Activated CD8-positive, alpha-beta memory T cell treated with anti-CD3 and anti-CD28 coated beads, Interleukin-2, amount 10 ng/mL, durations not matched to agents 7 days and 5 days (primary cell): ENCODE measurements at regions of chrX and their contacts with region 1.

Region 1: DNA sequence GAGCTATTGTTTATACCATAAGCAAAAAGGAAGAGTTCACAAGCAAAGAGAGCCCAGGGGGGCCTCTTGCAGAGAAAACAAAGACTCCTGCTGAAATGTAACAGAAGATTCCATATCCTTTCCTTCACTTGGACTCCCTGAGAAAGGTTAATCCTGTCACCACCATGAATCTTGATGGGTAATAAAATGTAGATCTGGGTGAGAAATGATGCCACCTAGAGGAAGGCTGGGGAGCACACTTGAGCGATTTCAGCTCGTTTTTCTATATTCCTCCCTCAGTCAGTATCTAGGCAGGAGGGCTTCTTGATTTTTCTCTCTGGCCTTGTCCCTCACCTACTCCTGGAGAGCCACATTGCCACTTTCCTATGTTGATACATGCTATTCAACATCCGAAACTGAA is 10.2 kb upstream of the KCNE5 start:
- DNase-seq: no peak
- ATAC-seq: no peak
- H3K4me3 Mint-ChIP-seq: no peak overlapping the region
- H3K27ac Mint-ChIP-seq: no peak overlapping the region
- H3K4me1 Mint-ChIP-seq: peaks cover 20% of the 10 kb centered on the region
- H3K27me3 Mint-ChIP-seq: no peaks in the 10 kb centered on the region

Region 2: DNA sequence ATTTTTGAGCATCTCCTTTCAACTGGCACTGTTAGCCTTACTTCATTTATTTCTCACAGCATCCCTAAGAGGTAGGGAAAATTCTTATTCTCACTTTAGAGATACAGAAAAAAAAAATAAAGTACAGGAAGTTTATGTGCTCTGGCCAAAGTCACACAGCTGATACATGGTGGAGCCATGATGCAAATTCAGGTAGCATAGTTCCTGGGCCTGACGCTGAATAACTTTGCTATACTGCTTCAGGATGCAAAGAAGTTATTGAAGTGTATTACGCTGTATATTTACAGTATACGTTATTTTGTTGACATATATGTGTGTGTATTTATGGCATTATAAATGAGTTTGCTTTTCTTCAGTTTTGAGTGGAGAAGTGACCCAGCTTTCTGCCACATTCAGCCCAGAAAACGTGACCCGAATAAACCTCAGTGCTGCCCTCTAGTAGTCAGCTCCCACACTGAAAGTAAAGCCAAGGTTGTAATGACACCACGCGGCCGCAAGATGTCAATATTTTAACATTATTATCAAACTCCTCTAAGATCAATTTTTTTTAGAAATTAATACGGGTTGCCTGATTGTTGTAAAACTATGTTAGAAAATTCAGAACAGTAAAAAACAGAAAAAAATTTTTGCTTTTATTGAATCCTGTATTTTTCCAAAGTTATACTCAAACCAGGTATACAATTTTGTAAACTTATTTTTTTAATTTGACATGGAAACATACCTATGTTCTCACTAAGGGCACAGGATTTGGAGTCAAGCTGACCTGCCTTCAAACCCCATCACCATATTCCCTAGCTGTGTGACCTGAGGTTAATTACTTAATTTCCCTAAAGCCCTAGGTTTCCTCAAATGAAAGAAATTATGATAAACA is 149.5 kb before region 1 on chrX:
- CTCF ChIA-PET with region 1: interaction called, 19 read pairs
- DNase-seq: peak; percentile 65
- ATAC-seq: peak; percentile 49
- H3K4me3 Mint-ChIP-seq: no peak overlapping the region
- H3K27ac Mint-ChIP-seq: no peak overlapping the region
- H3K4me1 Mint-ChIP-seq: peaks cover 2% of the 10 kb centered on the region
- H3K27me3 Mint-ChIP-seq: no peaks in the 10 kb centered on the region

Region 3: DNA sequence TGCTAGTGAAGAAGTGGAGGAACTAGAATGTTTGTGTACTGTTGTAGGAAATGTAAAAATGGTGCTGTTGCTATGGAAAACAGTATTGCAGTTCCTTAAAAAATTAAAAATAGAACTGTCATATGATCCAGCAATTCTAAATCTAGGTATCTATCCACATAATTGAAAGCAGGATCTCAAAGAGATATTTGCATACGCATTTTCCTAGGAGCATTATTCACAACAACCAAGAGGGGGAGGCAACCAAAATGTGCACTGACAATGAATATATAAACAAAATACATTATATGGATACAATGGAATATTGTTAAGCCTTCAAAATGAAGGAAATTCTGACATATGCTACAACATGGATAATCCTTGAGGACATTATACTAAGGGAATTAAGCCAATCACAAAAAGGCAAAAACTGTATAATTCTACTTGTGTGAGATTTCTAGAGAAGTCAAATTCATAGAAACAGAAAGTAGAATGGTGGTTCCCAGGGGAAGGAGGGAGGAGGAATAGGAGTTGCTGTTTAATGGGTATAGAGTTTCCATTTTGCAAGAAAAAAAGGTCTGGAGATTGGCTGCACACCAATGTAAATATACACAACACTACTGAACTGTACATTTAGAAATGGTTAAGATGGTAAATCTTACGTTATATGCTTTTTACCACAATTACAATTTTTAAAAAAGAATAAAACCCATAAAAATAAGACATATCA is 25.4 kb after region 1 on chrX:
- CTCF ChIA-PET with region 1: no interaction called
- DNase-seq: no peak
- ATAC-seq: no peak
- H3K4me3 Mint-ChIP-seq: no peak overlapping the region
- H3K27ac Mint-ChIP-seq: no peak overlapping the region
- H3K4me1 Mint-ChIP-seq: no peaks in the 10 kb centered on the region
- H3K27me3 Mint-ChIP-seq: no peaks in the 10 kb centered on the region